ENCODE measurements at regions of chr16 and their contacts with region 1.

Region 1: GRCh38 chr16:85659805-85660495 is 28.8 kb downstream of the GINS2 start:
- H3K4me3 ChIP-seq: no peak overlapping the region
- H3K27ac ChIP-seq: no peak overlapping the region
- H3K4me1 ChIP-seq: no peaks in the 10 kb centered on the region
- CTCF ChIP-seq: peak; percentile 86

Region 2: GRCh38 chr16:85675251-85675927 is 15.4 kb after region 1 on chr16:
- CTCF ChIA-PET with region 1: interaction called, 24 read pairs
- POLR2A ChIA-PET with region 1: no interaction called
- H3K4me3 ChIP-seq: no peak overlapping the region
- H3K27ac ChIP-seq: no peak overlapping the region
- H3K4me1 ChIP-seq: peaks cover 11% of the 10 kb centered on the region
- CTCF ChIP-seq: no peak

Region 3: GRCh38 chr16:85683363-85683762 is 23.4 kb after region 1 on chr16:
- CTCF ChIA-PET with region 1: interaction called, 23 read pairs
- POLR2A ChIA-PET with region 1: no interaction called
- H3K4me3 ChIP-seq: no peak overlapping the region
- H3K27ac ChIP-seq: no peak overlapping the region
- H3K4me1 ChIP-seq: no peaks in the 10 kb centered on the region; the same call in 1 of the 2 replicates
- CTCF ChIP-seq: no peak

Region 4: GRCh38 chr16:85699628-85700027 is 39.7 kb after region 1 on chr16:
- CTCF ChIA-PET with region 1: no interaction called
- POLR2A ChIA-PET with region 1: no interaction called
- H3K4me3 ChIP-seq: no peak overlapping the region
- H3K27ac ChIP-seq: no peak overlapping the region
- H3K4me1 ChIP-seq: no peaks in the 10 kb centered on the region
- CTCF ChIP-seq: no peak

Region 5: GRCh38 chr16:85736921-85737320 is 77.0 kb after region 1 on chr16:
- CTCF ChIA-PET with region 1: interaction called, 10 read pairs
- POLR2A ChIA-PET with region 1: no interaction called
- H3K4me3 ChIP-seq: no peak overlapping the region
- H3K27ac ChIP-seq: no peak overlapping the region
- H3K4me1 ChIP-seq: no peaks in the 10 kb centered on the region
- CTCF ChIP-seq: no peak

Measured in HEK293 (cell line).